T-cell (primary cell): ENCODE measurements at regions of chr4 and their contacts with region 1.

Region 1: DNA sequence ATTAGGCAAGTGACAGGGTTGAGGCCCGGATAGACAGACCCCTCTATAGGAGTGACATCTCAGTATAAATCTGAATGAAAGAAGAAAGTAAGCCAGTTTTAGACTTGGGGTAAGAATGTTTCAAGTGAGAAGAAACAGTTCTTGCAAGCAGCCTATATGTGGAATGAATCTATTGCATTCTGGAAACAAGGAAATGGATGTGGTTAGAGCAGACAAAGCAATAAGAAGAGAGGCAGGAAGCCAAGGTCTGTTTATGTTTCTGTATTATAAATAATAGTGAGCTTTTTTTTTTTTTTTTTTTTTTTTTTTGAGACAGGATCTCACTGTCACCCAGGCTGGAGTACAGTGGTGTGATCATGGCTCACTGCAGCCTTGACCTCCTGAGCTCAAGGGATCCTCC is 255.8 kb downstream of the UNC5C start:
- DNase-seq: peak in 2 of 35 experiments; percentile 1 to 30
- ATAC-seq: peak; percentile 56 to 92 (median 74)
- H3K4me3 ChIP-seq: no peak overlapping the region
- H3K4me3 Mint-ChIP-seq: peak overlapping the region in 1 of 3 donors; percentile 27
- H3K27ac ChIP-seq: no peak overlapping the region
- H3K27ac Mint-ChIP-seq: peak overlapping the region; percentile 22 to 47
- H3K4me1 ChIP-seq: peaks cover 7 to 67% of the 10 kb centered on the region in 2 experiments
- H3K4me1 Mint-ChIP-seq: peaks cover 39 to 50% (median 39%) of the 10 kb centered on the region in 3 donors
- H3K27me3 ChIP-seq: no peaks in the 10 kb centered on the region
- H3K27me3 Mint-ChIP-seq: no peaks in the 10 kb centered on the region

Region 2: DNA sequence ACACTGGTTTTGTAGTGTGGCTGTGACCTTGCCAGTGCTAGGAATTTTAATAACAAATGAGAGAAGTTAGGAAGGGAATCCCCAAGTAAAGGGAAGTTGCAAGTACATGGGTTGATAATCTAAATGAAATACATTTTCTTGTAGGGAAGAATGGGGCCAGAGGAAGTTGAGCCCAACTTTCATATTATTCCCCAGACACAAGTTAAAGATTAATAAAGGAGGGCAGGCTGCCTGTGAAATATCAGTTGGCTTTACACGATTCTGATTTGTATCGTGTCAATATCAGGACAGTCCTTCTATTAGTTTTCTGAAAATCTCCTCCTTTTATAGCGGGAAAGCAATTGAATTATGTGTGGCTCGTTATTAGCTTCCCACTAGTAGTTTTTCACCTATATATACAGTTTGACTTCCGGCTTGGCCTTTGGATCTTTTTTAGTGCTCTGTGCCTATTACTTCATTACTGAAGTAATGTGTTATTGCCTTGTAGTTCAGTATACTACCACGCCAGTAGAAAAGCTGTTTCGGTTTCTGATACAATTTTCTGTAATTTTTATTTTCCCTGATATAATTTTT is 839.5 kb before region 1 on chr4:
- CTCF ChIA-PET with region 1: no interaction called
- POLR2A ChIA-PET with region 1: interaction called in 1 of 2 experiments, 13 read pairs
- DNase-seq: no peak
- ATAC-seq: no peak
- H3K4me3 ChIP-seq: no peak overlapping the region
- H3K4me3 Mint-ChIP-seq: peak overlapping the region; percentile 86 to 87 (median 86)
- H3K27ac ChIP-seq: no peak overlapping the region
- H3K27ac Mint-ChIP-seq: no peak overlapping the region
- H3K4me1 ChIP-seq: peaks cover 10 to 11% of the 10 kb centered on the region in 2 experiments
- H3K4me1 Mint-ChIP-seq: peaks cover 25 to 37% (median 35%) of the 10 kb centered on the region in 3 donors
- H3K27me3 ChIP-seq: peaks cover 0 to 13% of the 10 kb centered on the region in 2 experiments
- H3K27me3 Mint-ChIP-seq: peaks cover 8 to 11% of the 10 kb centered on the region in 2 donors

Region 3: GRCh38 chr4:94728056-94728766 is 564.8 kb before region 1 on chr4:
- CTCF ChIA-PET with region 1: no interaction called
- POLR2A ChIA-PET with region 1: no interaction called
- DNase-seq: no peak
- ATAC-seq: no peak
- H3K4me3 ChIP-seq: no peak overlapping the region
- H3K4me3 Mint-ChIP-seq: no peak overlapping the region
- H3K27ac ChIP-seq: no peak overlapping the region
- H3K27ac Mint-ChIP-seq: no peak overlapping the region
- H3K4me1 ChIP-seq: no peaks in the 10 kb centered on the region
- H3K4me1 Mint-ChIP-seq: no peaks in the 10 kb centered on the region
- H3K27me3 ChIP-seq: no peaks in the 10 kb centered on the region
- H3K27me3 Mint-ChIP-seq: peaks cover 3 to 5% of the 10 kb centered on the region in 2 donors

Region 4: DNA sequence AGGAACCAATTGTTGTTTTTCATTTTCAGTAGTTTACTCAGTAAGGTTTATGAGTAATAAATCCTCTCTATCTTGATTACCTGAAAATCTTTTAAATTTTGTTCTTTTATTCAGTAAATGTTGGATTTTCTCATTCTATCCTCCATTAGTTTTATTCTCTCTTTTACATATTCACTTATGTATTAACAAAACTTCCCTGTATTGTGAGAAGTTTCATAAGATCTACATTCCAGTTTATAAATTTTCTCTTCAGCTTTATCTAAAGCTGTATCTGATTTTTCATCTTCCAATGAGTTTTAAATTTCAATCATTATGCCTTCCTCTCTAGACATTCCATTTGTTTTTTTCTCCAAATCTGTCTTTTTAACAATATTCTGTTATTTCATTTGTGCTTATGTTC is 54.5 kb before region 1 on chr4:
- CTCF ChIA-PET with region 1: no interaction called
- POLR2A ChIA-PET with region 1: no interaction called
- DNase-seq: no peak
- ATAC-seq: no peak
- H3K4me3 ChIP-seq: no peak overlapping the region
- H3K4me3 Mint-ChIP-seq: no peak overlapping the region
- H3K27ac ChIP-seq: no peak overlapping the region
- H3K27ac Mint-ChIP-seq: no peak overlapping the region
- H3K4me1 ChIP-seq: no peaks in the 10 kb centered on the region
- H3K4me1 Mint-ChIP-seq: no peaks in the 10 kb centered on the region
- H3K27me3 ChIP-seq: no peaks in the 10 kb centered on the region
- H3K27me3 Mint-ChIP-seq: no peaks in the 10 kb centered on the region

Region 5: GRCh38 chr4:95325665-95326064 is 32.7 kb after region 1 on chr4:
- CTCF ChIA-PET with region 1: no interaction called
- POLR2A ChIA-PET with region 1: no interaction called
- DNase-seq: no peak
- ATAC-seq: no peak
- H3K4me3 ChIP-seq: no peak overlapping the region
- H3K4me3 Mint-ChIP-seq: no peak overlapping the region
- H3K27ac ChIP-seq: no peak overlapping the region
- H3K27ac Mint-ChIP-seq: no peak overlapping the region
- H3K4me1 ChIP-seq: no peaks in the 10 kb centered on the region
- H3K4me1 Mint-ChIP-seq: no peaks in the 10 kb centered on the region
- H3K27me3 ChIP-seq: no peaks in the 10 kb centered on the region
- H3K27me3 Mint-ChIP-seq: no peaks in the 10 kb centered on the region